IMR-90 (cell line): ENCODE measurements at regions of chr14 and their contacts with region 1.

Region 1: DNA sequence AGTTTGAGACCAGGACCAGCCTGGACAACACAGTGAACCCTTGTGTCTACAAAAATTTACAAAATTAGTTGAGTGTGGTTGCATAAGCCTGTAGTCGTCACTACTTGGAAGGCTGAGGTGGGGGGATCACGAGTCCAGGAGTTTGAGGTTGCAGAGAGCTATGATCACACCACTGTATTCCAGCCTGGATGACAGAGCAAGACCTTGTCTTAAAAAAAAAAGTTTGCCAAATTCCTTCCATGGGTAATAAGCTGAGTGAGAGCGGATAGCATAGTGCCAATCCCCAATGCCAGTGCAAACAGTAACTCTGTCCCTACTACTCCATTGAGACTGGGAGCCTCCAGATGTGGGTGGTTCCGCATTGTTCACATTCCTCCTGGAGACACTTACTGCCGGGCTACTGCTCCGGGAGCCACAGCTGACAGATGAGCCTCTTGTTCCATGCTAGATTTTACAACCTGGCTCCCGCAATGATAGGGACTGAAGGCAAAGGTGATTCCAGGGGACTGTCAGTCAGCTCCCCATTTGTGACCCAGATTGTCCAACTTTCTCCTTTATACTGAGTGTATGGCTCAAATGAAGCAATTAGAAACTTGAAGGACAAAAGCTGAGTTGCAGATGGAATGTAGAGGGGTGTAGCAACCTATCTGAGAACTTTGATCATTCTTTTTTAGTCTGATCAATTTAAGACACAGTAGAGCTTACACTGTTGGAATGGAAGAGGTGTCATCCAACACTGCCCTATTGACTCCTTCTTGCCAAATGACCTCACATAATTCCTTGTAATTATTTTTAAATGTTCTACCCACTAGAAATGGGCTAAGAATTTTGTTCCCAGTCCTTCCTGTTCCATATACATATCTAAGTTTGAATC is 13.4 kb upstream of the FRMD6 start:
- DNase-seq: no peak
- ATAC-seq: peak; percentile 80
- H3K4me3 ChIP-seq: no peak overlapping the region
- H3K27ac ChIP-seq: no peak overlapping the region
- H3K4me1 ChIP-seq: peaks cover 10% of the 10 kb centered on the region
- H3K27me3 ChIP-seq: no peaks in the 10 kb centered on the region
- CTCF ChIP-seq: no peak
- POLR2A ChIP-seq: no peak
- RAD21 ChIP-seq: no peak

Region 2: GRCh38 chr14:51328064-51328771 is 310.1 kb before region 1 on chr14:
- CTCF ChIA-PET with region 1: no interaction called
- POLR2A ChIA-PET with region 1: no interaction called
- dilution Hi-C with region 1: no loop called
- in situ Hi-C with region 1: no loop called
- intact Hi-C with region 1: loop called (anchors 1 kb)
- DNase-seq: peak; percentile 82
- ATAC-seq: peak; percentile 81
- H3K4me3 ChIP-seq: peak overlapping the region; percentile 15; the same call in 1 of the 2 replicates
- H3K27ac ChIP-seq: peak overlapping the region; percentile 51
- H3K4me1 ChIP-seq: peaks cover 16% of the 10 kb centered on the region
- H3K27me3 ChIP-seq: no peaks in the 10 kb centered on the region
- CTCF ChIP-seq: no peak
- POLR2A ChIP-seq: no peak
- RAD21 ChIP-seq: no peak

Region 3: DNA sequence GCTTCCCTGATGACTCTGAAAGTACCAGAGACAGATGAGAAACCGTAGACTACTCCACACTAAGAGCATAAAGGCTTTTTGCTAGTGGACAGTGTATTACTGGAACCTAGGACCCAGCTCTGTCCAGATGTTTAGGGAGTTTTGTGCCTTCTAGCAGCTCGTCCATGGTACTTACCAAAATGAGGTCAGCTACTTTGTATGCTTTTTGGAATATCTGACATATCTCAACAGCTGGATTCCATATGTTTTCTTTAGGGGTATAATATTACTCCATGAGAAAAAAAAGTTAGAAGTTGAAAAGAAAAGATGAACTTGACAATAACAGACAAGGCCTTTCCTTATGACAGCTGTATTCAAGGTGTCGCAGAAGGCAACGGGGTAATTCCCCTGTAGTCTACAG is 18.7 kb before region 1 on chr14:
- CTCF ChIA-PET with region 1: no interaction called
- POLR2A ChIA-PET with region 1: no interaction called
- dilution Hi-C with region 1: no loop called
- in situ Hi-C with region 1: no loop called
- intact Hi-C with region 1: loop called (anchors 2 kb)
- DNase-seq: peak; percentile 73
- ATAC-seq: peak; percentile 33
- H3K4me3 ChIP-seq: no peak overlapping the region
- H3K27ac ChIP-seq: no peak overlapping the region
- H3K4me1 ChIP-seq: peaks cover 22% of the 10 kb centered on the region
- H3K27me3 ChIP-seq: no peaks in the 10 kb centered on the region
- CTCF ChIP-seq: no peak
- POLR2A ChIP-seq: no peak
- RAD21 ChIP-seq: no peak